ENCODE measurements at regions of chr9 and their contacts with region 1.

Region 1: GRCh38 chr9:131722009-131722629 is 17.8 kb downstream of the RAPGEF1 start:
- DNase-seq: no peak
- H3K4me3 ChIP-seq: no peak overlapping the region
- H3K27ac ChIP-seq: no peak overlapping the region
- H3K4me1 ChIP-seq: peaks cover 0 to 3% (median 1%) of the 10 kb centered on the region in 4 experiments; a peak in 2 of 7 replicates
- H3K27me3 ChIP-seq: no peaks in the 10 kb centered on the region
- CTCF ChIP-seq: peak in 2 of 3 experiments; percentile 22 to 31; a peak in 2 of 4 replicates
- EP300 ChIP-seq: no peak
- POLR2A ChIP-seq: no peak
- RAD21 ChIP-seq: peak in 1 of 2 experiments; percentile 6; a peak in 1 of 4 replicates

Region 2: GRCh38 chr9:131733541-131734061 is 11.5 kb after region 1 on chr9:
- CTCF ChIA-PET with region 1: interaction called, 11 read pairs
- POLR2A ChIA-PET with region 1: interaction called, 5 read pairs
- DNase-seq: no peak
- H3K4me3 ChIP-seq: no peak overlapping the region
- H3K27ac ChIP-seq: no peak overlapping the region
- H3K4me1 ChIP-seq: peaks cover 0 to 15% (median 4%) of the 10 kb centered on the region in 4 experiments; a peak in 5 of 7 replicates
- H3K27me3 ChIP-seq: no peaks in the 10 kb centered on the region
- CTCF ChIP-seq: no peak
- EP300 ChIP-seq: no peak
- POLR2A ChIP-seq: no peak
- RAD21 ChIP-seq: no peak